CD14-positive monocyte (primary cell): ENCODE measurements at regions of chr3 and their contacts with region 1.

Region 1: DNA sequence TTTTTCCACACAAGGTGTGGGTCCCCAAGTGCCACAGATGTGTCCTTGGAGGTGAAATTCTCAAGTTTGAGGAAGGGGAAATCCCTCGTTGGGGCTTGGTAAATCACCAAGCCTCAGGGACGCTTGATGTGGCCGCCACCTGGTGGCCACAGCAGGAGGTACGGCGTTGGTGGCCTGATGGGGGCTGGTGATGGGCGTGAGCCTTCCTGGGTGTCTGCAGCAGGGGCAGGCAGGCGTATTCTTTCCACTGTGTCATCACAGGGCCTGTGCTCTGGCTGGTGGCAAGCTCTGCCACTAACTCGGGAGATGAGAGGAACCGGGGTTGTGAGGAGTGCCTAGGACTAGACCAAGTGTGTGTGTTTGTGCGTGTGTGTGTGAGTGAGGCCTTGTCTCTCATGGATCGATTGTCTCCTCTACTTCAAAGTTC is 4.2 kb downstream of the ACOX2 start:
- DNase-seq: peak; percentile 80 to 84 (median 82)
- H3K4me3 ChIP-seq: no peak overlapping the region
- H3K4me3 Mint-ChIP-seq: no peak overlapping the region
- H3K27ac ChIP-seq: no peak overlapping the region
- H3K27ac Mint-ChIP-seq: peak overlapping the region in 6 of 7 donors; percentile 53 to 82 (median 70)
- H3K4me1 ChIP-seq: peaks cover 12 to 24% of the 10 kb centered on the region in 2 donors
- H3K4me1 Mint-ChIP-seq: peaks cover 31% of the 10 kb centered on the region
- H3K27me3 ChIP-seq: no peaks in the 10 kb centered on the region
- H3K27me3 Mint-ChIP-seq: peaks cover 0 to 5% (median 0%) of the 10 kb centered on the region in 3 donors
- CTCF ChIP-seq: peak; percentile 96

Region 2: DNA sequence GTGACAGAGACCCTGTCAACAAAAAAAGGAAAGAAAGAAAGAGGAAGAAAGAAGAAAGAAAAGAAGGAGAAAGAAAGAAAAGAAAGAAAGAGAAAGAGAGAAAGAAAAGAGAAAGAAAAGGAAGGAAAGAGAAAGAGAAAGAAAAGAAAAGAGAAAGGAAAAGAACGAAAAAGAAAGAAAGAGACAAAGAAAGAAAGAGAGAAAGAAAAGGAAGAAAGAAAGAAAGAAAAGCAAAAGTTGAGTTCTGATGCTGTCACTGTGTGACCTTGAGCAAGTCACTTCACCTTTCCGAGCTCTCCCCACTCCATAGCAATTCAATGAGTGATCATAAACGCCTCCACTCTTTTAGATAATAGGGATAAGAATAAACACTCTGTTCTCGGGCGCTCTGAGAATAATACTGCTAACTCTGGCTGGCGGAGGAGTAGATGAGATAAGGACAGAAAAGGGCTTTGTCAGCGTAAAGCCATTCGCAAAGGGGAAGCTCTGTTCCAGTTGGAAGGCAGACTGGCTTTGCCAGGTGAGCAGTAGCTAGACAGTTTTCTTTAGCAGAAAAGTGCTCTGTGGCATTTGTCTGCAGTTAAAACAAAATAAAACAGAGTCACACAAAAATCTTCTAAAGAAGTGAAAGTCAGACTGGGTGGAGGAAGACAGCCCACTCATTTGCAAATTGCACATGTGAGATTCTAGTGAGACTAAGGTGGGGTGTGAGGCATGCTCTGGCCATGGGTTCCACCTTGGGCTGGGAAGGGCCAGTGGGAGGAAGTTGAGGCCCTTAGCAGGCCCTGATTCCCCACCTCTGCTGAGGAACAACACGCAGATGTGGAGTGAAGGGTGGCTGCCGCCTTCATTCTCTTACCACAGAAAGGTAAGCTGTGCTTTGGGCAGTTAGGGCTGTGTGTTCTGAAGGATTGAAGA is 534.2 kb before region 1 on chr3:
- intact Hi-C with region 1: no loop called
- DNase-seq: peak in 1 of 3 donors; percentile 38
- H3K4me3 ChIP-seq: peak overlapping the region in 1 of 3 experiments; percentile 5
- H3K4me3 Mint-ChIP-seq: peak overlapping the region in 1 of 2 donors; percentile 84
- H3K27ac ChIP-seq: no peak overlapping the region
- H3K27ac Mint-ChIP-seq: peak overlapping the region in 4 of 7 donors; percentile 6 to 72 (median 17)
- H3K4me1 ChIP-seq: peaks cover 25 to 35% of the 10 kb centered on the region in 2 donors
- H3K4me1 Mint-ChIP-seq: peaks cover 36% of the 10 kb centered on the region
- H3K27me3 ChIP-seq: no peaks in the 10 kb centered on the region
- H3K27me3 Mint-ChIP-seq: peaks cover 2 to 7% (median 3%) of the 10 kb centered on the region in 3 donors
- CTCF ChIP-seq: no peak

Region 3: GRCh38 chr3:58188173-58188564 is 344.6 kb before region 1 on chr3:
- intact Hi-C with region 1: loop called in 1 of 2 experiments (anchors 10 kb)
- DNase-seq: no peak
- H3K4me3 ChIP-seq: no peak overlapping the region
- H3K4me3 Mint-ChIP-seq: no peak overlapping the region
- H3K27ac ChIP-seq: no peak overlapping the region
- H3K27ac Mint-ChIP-seq: no peak overlapping the region
- H3K4me1 ChIP-seq: peaks cover 0 to 6% of the 10 kb centered on the region in 2 donors
- H3K4me1 Mint-ChIP-seq: peaks cover 6% of the 10 kb centered on the region
- H3K27me3 ChIP-seq: no peaks in the 10 kb centered on the region
- H3K27me3 Mint-ChIP-seq: peaks cover 0 to 5% (median 0%) of the 10 kb centered on the region in 3 donors
- CTCF ChIP-seq: no peak

Region 4: DNA sequence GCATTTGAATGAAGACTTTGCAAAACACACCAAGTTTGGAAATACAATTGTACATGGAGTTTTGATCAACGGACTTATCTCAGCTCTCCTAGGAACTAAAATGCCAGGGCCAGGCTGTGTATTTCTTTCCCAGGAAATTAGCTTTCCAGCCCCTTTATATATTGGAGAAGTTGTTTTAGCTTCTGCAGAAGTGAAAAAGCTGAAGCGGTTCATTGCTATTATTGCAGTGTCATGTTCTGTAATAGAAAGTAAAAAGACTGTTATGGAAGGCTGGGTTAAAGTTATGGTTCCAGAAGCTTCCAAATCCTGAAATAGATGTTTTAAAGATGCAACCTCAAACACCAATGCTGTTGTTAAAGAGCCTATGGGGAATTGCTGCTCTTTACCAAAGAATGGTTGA is 215.0 kb before region 1 on chr3:
- intact Hi-C with region 1: loop called (anchors 5 to 10 kb)
- DNase-seq: peak in 1 of 3 donors; percentile 18
- H3K4me3 ChIP-seq: no peak overlapping the region
- H3K4me3 Mint-ChIP-seq: no peak overlapping the region
- H3K27ac ChIP-seq: peak overlapping the region; percentile 22 to 47
- H3K27ac Mint-ChIP-seq: peak overlapping the region; percentile 67 to 81 (median 77)
- H3K4me1 ChIP-seq: peaks cover 15 to 17% of the 10 kb centered on the region in 2 donors
- H3K4me1 Mint-ChIP-seq: peaks cover 19% of the 10 kb centered on the region
- H3K27me3 ChIP-seq: no peaks in the 10 kb centered on the region
- H3K27me3 Mint-ChIP-seq: peaks cover 0 to 2% (median 0%) of the 10 kb centered on the region in 3 donors
- CTCF ChIP-seq: no peak

Region 5: GRCh38 chr3:58324391-58325390 is 208.1 kb before region 1 on chr3:
- intact Hi-C with region 1: loop called (anchors 5 to 10 kb)
- DNase-seq: no peak
- H3K4me3 ChIP-seq: no peak overlapping the region
- H3K4me3 Mint-ChIP-seq: no peak overlapping the region
- H3K27ac ChIP-seq: no peak overlapping the region
- H3K27ac Mint-ChIP-seq: peak overlapping the region in 2 of 7 donors; percentile 10 to 11
- H3K4me1 ChIP-seq: no peaks in the 10 kb centered on the region
- H3K4me1 Mint-ChIP-seq: peaks cover 5% of the 10 kb centered on the region
- H3K27me3 ChIP-seq: no peaks in the 10 kb centered on the region
- H3K27me3 Mint-ChIP-seq: peaks cover 0 to 2% (median 0%) of the 10 kb centered on the region in 3 donors
- CTCF ChIP-seq: no peak

Region 6: GRCh38 chr3:58433400-58434169 is 99.2 kb before region 1 on chr3 and contains the start of gene PDHB:
- intact Hi-C with region 1: loop called in 1 of 2 experiments (anchors 10 kb)
- DNase-seq: peak; percentile 82 to 84 (median 84)
- H3K4me3 ChIP-seq: peak within 1 kb of the TSS; percentile 93 to 98 (median 96)
- H3K4me3 Mint-ChIP-seq: peak within 1 kb of the TSS; percentile 88 to 94
- H3K27ac ChIP-seq: peak within 1 kb of the TSS; percentile 74 to 91
- H3K27ac Mint-ChIP-seq: peak within 1 kb of the TSS; percentile 87 to 96 (median 94)
- H3K4me1 ChIP-seq: peaks cover 15 to 18% of the 10 kb centered on the region in 2 donors
- H3K4me1 Mint-ChIP-seq: peaks cover 19% of the 10 kb centered on the region
- H3K27me3 ChIP-seq: no peaks in the 10 kb centered on the region
- H3K27me3 Mint-ChIP-seq: peaks cover 0 to 1% (median 0%) of the 10 kb centered on the region in 3 donors
- CTCF ChIP-seq: no peak
- polyA plus RNA-seq, gene PDHB: 30.5 to 125 (median 112) TPM

Region 7: DNA sequence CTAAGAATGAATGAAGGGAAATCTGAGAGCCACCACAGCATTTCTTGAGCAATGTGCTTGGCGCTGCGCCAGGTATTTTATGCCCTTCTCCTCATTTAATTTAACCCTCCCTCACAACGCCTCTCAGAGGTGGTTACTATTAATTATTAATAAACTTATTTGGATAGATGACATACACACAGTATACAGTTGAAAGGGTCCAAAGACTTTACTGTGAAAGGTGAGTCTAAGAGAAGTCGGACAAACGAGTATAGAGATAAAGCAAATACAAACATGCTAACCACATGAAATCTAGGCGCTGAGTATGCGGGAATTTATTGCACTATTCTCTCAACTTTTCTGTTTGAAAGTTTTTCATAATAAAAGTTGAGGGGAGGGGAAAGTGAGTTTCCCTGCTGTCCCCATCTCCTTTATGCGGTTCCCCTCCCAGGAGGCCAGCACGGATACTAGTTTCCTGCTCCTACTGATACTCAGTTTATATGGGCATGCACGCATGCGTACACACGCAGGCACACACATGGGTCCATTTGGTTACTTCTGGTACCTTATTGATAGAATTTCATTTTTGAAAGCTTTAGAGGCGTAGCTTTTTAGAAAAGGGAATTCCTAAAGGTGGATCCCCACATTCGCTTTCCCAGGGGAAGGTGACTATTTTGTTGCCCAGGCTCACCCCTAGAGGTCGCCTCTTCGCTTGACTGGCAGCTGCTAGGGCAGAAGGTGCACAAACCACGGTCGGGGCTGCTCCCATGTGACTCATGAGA is 69.4 kb before region 1 on chr3:
- intact Hi-C with region 1: loop called (anchors 2 to 5 kb)
- DNase-seq: peak; percentile 74 to 87 (median 81)
- H3K4me3 ChIP-seq: peak overlapping the region in 2 of 3 experiments; percentile 12 to 55
- H3K4me3 Mint-ChIP-seq: peak overlapping the region; percentile 66 to 81
- H3K27ac ChIP-seq: no peak overlapping the region
- H3K27ac Mint-ChIP-seq: peak overlapping the region in 4 of 7 donors; percentile 21 to 85 (median 38)
- H3K4me1 ChIP-seq: peaks cover 14 to 17% of the 10 kb centered on the region in 2 donors
- H3K4me1 Mint-ChIP-seq: peaks cover 16% of the 10 kb centered on the region
- H3K27me3 ChIP-seq: no peaks in the 10 kb centered on the region
- H3K27me3 Mint-ChIP-seq: peaks cover 0 to 5% (median 0%) of the 10 kb centered on the region in 3 donors
- CTCF ChIP-seq: peak; percentile 97